ENCODE measurements at regions of chr15 and their contacts with region 1.

Region 1: DNA sequence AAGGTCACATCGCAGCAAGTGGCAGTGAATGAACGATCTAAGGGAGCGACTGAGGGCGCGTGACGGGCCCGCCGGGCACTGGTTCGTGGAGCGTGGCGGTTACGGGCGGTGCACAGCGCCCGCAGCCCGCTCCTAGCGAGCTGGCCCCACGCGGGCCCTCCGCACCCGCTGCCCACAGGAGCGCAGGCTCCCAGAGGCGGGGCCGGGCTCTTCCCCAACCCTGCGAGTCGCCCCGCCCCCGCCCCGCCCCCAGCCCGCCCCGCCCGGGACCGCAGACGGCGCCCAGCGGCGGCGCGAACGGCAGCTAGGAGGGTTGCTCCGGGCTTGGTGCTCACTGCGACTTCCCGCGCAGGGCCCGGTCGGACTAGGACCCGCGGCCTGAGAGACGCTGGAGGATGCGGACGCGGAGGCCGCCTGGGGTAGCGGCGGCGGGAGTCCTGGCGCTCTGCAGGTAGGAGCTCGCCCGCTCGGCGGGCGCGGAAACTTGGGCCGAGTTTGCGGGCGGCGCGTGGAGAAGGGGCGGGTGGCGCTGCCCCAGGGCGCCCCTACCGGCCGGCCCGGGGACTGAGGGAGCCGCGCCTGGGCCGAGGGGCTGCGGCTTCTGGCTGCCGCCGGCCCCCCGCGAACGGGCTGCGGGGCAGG is at the start of gene C15orf39:
- DNase-seq: peak; percentile 86
- H3K4me3 Mint-ChIP-seq: peak within 1 kb of the TSS; percentile 94
- H3K27ac Mint-ChIP-seq: peak within 1 kb of the TSS; percentile 79
- H3K4me1 Mint-ChIP-seq: peaks cover 54% of the 10 kb centered on the region
- H3K27me3 Mint-ChIP-seq: no peaks in the 10 kb centered on the region
- CTCF ChIP-seq: peak; percentile 92
- total RNA-seq, gene C15orf39: 77.2 and 86.5 TPM in 2 replicates

Region 2: GRCh38 chr15:75029378-75030022 is 172.2 kb before region 1 on chr15:
- CTCF ChIA-PET with region 1: interaction called, 28 read pairs
- intact Hi-C with region 1: no loop called
- DNase-seq: peak; percentile 95
- H3K4me3 Mint-ChIP-seq: no peak overlapping the region
- H3K27ac Mint-ChIP-seq: no peak overlapping the region
- H3K4me1 Mint-ChIP-seq: peaks cover 45% of the 10 kb centered on the region
- H3K27me3 Mint-ChIP-seq: no peaks in the 10 kb centered on the region
- CTCF ChIP-seq: peak; percentile 97

Region 3: GRCh38 chr15:75069301-75069925 is 132.3 kb before region 1 on chr15:
- CTCF ChIA-PET with region 1: interaction called, 17 read pairs
- intact Hi-C with region 1: no loop called
- DNase-seq: no peak
- H3K4me3 Mint-ChIP-seq: no peak overlapping the region
- H3K27ac Mint-ChIP-seq: no peak overlapping the region
- H3K4me1 Mint-ChIP-seq: peaks cover 41% of the 10 kb centered on the region
- H3K27me3 Mint-ChIP-seq: no peaks in the 10 kb centered on the region
- CTCF ChIP-seq: no peak

Region 4: DNA sequence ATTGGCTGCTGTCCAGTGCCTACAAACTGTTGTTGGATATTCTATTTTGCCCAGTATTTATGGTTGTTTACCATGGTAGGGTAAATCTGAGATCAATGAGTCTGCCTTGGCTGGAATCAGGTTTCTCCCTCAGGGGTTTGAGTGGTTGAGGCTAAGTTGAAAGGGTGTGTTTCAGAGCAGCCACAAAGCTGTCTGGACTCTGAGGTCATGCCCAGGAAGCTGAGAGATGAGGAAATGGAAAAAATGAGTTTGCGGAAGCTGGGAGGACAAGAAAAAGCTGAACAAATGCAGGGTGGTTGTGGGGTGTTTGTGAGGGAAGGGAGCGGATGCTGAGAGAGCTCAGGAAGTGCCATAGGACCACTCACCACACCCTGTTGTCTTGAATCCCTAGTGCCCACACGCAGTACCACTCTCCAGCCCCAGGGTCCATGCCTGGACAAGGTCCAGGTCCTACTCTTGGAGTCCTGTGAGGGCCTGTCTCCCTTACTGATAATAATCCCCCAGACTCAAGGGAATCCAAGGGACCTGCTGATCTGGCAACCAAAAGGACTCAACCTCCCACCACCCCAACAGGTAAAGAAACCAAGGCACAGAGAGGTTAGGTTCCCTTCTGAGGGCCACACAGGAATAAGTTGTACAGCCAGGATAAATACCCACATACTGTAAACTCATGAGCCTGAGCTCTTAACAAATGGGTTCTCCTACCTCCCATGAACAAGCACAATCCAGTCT is 96.8 kb before region 1 on chr15:
- CTCF ChIA-PET with region 1: interaction called, 14 read pairs
- intact Hi-C with region 1: loop called (anchors 1 kb)
- DNase-seq: peak; percentile 93
- H3K4me3 Mint-ChIP-seq: peak overlapping the region; percentile 58
- H3K27ac Mint-ChIP-seq: peak overlapping the region; percentile 100
- H3K4me1 Mint-ChIP-seq: peaks cover 51% of the 10 kb centered on the region
- H3K27me3 Mint-ChIP-seq: peaks cover 13% of the 10 kb centered on the region
- CTCF ChIP-seq: no peak

Region 5: GRCh38 chr15:75153087-75153486 is 48.6 kb before region 1 on chr15:
- CTCF ChIA-PET with region 1: interaction called, 5 read pairs
- intact Hi-C with region 1: loop called (anchors 10 kb)
- DNase-seq: no peak
- H3K4me3 Mint-ChIP-seq: no peak overlapping the region
- H3K27ac Mint-ChIP-seq: no peak overlapping the region
- H3K4me1 Mint-ChIP-seq: peaks cover 23% of the 10 kb centered on the region
- H3K27me3 Mint-ChIP-seq: no peaks in the 10 kb centered on the region
- CTCF ChIP-seq: no peak

Region 6: DNA sequence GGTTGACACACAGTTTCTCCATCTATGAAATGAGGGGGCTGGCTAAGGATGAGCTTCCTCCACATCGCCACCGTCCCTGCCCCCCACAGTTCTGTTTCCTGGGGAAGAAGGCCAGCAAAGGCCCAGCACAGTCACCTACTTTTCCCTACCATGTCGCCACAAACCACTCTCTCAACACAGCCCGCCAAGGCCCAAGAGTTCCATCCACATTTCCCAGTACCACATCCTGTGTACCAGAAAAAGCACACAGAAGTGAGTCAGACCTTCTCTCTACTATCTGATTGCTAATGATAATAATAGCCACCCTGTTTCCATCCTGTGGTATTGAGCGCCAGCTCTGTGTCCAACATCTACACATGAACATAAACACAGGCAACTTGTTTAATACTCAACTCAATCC is 30.3 kb before region 1 on chr15:
- CTCF ChIA-PET with region 1: interaction called, 17 read pairs
- intact Hi-C with region 1: no loop called
- DNase-seq: peak; percentile 35
- H3K4me3 Mint-ChIP-seq: no peak overlapping the region
- H3K27ac Mint-ChIP-seq: peak overlapping the region; percentile 74
- H3K4me1 Mint-ChIP-seq: peaks cover 43% of the 10 kb centered on the region
- H3K27me3 Mint-ChIP-seq: no peaks in the 10 kb centered on the region
- CTCF ChIP-seq: no peak

Region 7: DNA sequence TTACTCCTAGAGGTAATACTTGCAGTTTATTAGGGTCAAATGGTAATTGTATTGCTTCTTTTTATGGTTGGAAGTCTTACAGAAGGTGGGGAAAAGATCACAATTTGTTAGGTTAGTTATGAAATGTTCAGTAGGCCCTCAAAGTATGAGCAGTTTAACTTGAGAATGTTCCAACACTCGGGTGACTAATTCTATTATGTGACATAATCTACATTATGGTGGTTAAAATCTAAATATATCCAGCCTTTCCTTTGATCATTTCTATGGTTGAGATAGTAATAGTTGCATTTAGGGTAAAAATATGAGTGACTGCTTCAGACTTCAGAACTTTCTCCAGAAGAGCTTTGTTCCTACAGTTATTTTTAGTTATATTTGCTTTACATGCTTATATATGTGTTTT is 682.3 kb after region 1 on chr15:
- CTCF ChIA-PET with region 1: no interaction called
- intact Hi-C with region 1: no loop called
- DNase-seq: no peak
- H3K4me3 Mint-ChIP-seq: no peak overlapping the region
- H3K27ac Mint-ChIP-seq: no peak overlapping the region
- H3K4me1 Mint-ChIP-seq: no peaks in the 10 kb centered on the region
- H3K27me3 Mint-ChIP-seq: no peaks in the 10 kb centered on the region
- CTCF ChIP-seq: no peak

Measured in Calu3 (cell line).